Activated naive CD4-positive, alpha-beta T cell treated with anti-CD3 and anti-CD28 coated beads for 36 hours (primary cell): ENCODE measurements at regions of chr9 and their contacts with region 1.

Region 1: DNA sequence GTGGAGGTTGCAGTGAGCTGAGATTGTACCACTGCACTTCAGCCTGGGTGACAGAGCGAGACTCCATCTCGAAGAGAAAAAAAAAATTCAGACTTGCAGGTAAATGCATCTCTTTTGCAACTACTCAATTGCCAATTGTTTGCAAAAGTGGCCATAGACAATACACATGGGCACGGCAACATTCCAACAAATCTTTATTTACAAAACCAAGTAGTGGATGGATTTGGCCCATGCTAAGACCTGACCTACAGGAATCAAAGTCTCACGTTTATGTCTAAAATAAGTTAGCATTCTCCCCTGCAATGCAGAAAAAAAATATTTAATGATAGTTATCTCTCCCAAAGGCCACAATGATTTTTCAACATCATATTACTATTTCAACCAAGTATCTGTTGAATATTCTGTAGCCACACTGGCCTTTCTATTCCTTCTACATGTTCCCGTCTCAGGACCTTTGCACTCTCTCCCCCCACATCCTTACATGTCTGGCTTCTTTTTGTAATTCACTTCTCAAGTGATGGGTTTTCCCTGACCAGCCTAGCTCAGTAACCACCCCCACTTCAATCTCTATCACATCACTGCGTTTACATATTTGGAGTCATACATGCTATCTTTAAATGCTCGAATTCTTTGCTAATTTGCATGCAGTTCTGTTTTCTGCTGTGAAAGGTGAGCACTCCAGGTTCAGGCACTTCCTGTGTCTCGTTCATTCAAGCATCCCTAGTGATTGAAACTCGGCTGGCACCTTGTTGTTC is 54.2 kb downstream of the FNBP1 start:
- DNase-seq: peak; percentile 61
- H3K4me3 Mint-ChIP-seq: peak overlapping the region; percentile 7
- H3K27ac Mint-ChIP-seq: peak overlapping the region; percentile 83
- H3K4me1 Mint-ChIP-seq: peaks cover 85% of the 10 kb centered on the region
- H3K27me3 Mint-ChIP-seq: no peaks in the 10 kb centered on the region

Region 2: GRCh38 chr9:129910628-129911567 is 77.9 kb before region 1 on chr9:
- CTCF ChIA-PET with region 1: no interaction called
- intact Hi-C with region 1: no loop called
- DNase-seq: peak; percentile 46
- H3K4me3 Mint-ChIP-seq: no peak overlapping the region
- H3K27ac Mint-ChIP-seq: peak overlapping the region; percentile 75
- H3K4me1 Mint-ChIP-seq: peaks cover 17% of the 10 kb centered on the region
- H3K27me3 Mint-ChIP-seq: no peaks in the 10 kb centered on the region

Region 3: GRCh38 chr9:129932303-129933151 is 56.3 kb before region 1 on chr9:
- CTCF ChIA-PET with region 1: no interaction called
- intact Hi-C with region 1: loop called (anchors 1 kb)
- DNase-seq: no peak
- H3K4me3 Mint-ChIP-seq: peak overlapping the region; percentile 25
- H3K27ac Mint-ChIP-seq: peak overlapping the region; percentile 84
- H3K4me1 Mint-ChIP-seq: peaks cover 50% of the 10 kb centered on the region
- H3K27me3 Mint-ChIP-seq: no peaks in the 10 kb centered on the region

Region 4: GRCh38 chr9:129962889-129963703 is 25.7 kb before region 1 on chr9:
- CTCF ChIA-PET with region 1: interaction called, 5 read pairs
- intact Hi-C with region 1: loop called (anchors 1 kb)
- DNase-seq: peak; percentile 89
- H3K4me3 Mint-ChIP-seq: peak overlapping the region; percentile 70
- H3K27ac Mint-ChIP-seq: peak overlapping the region; percentile 95
- H3K4me1 Mint-ChIP-seq: peaks cover 78% of the 10 kb centered on the region
- H3K27me3 Mint-ChIP-seq: no peaks in the 10 kb centered on the region

Region 5: GRCh38 chr9:130023144-130023787 is 34.5 kb after region 1 on chr9:
- CTCF ChIA-PET with region 1: interaction called, 4 read pairs
- intact Hi-C with region 1: loop called (anchors 1 kb)
- DNase-seq: peak; percentile 45
- H3K4me3 Mint-ChIP-seq: peak overlapping the region; percentile 7
- H3K27ac Mint-ChIP-seq: peak overlapping the region; percentile 79
- H3K4me1 Mint-ChIP-seq: peaks cover 92% of the 10 kb centered on the region
- H3K27me3 Mint-ChIP-seq: no peaks in the 10 kb centered on the region

Region 6: GRCh38 chr9:130034570-130034969 is 45.8 kb after region 1 on chr9:
- CTCF ChIA-PET with region 1: interaction called, 7 read pairs
- intact Hi-C with region 1: loop called (anchors 1 kb)
- DNase-seq: peak; percentile 61
- H3K4me3 Mint-ChIP-seq: peak overlapping the region; percentile 11
- H3K27ac Mint-ChIP-seq: peak overlapping the region; percentile 95
- H3K4me1 Mint-ChIP-seq: peaks cover 90% of the 10 kb centered on the region
- H3K27me3 Mint-ChIP-seq: no peaks in the 10 kb centered on the region